AG04450 (cell line): ENCODE measurements at regions of chr14 and their contacts with region 1.

Region 1: GRCh38 chr14:23076785-23077408 is 18.0 kb downstream of the ACIN1 start:
- DNase-seq: no peak
- H3K4me3 ChIP-seq: no peak overlapping the region
- H3K27ac ChIP-seq: no peak overlapping the region
- H3K27me3 ChIP-seq: no peaks in the 10 kb centered on the region
- CTCF ChIP-seq: peak; percentile 75

Region 2: GRCh38 chr14:22147704-22148103 is 929.2 kb before region 1 on chr14:
- CTCF ChIA-PET with region 1: no interaction called
- POLR2A ChIA-PET with region 1: no interaction called
- DNase-seq: no peak
- H3K4me3 ChIP-seq: no peak overlapping the region
- H3K27ac ChIP-seq: no peak overlapping the region
- H3K27me3 ChIP-seq: peaks cover 12% of the 10 kb centered on the region
- CTCF ChIP-seq: no peak

Region 3: GRCh38 chr14:22994762-22995275 is 82.1 kb before region 1 on chr14:
- CTCF ChIA-PET with region 1: interaction called, 15 read pairs
- POLR2A ChIA-PET with region 1: no interaction called
- DNase-seq: no peak
- H3K4me3 ChIP-seq: no peak overlapping the region
- H3K27ac ChIP-seq: no peak overlapping the region
- H3K27me3 ChIP-seq: no peaks in the 10 kb centered on the region
- CTCF ChIP-seq: peak; percentile 78

Region 4: GRCh38 chr14:23095196-23096108 is 18.6 kb after region 1 on chr14 and contains the start of gene C14orf119:
- CTCF ChIA-PET with region 1: interaction called, 89 read pairs
- POLR2A ChIA-PET with region 1: interaction called, 31 read pairs
- DNase-seq: peak; percentile 99
- H3K4me3 ChIP-seq: peak within 1 kb of the TSS; percentile 95
- H3K27ac ChIP-seq: peak within 1 kb of the TSS; percentile 99
- H3K27me3 ChIP-seq: no peaks in the 10 kb centered on the region
- CTCF ChIP-seq: no peak
- polyA plus RNA-seq, gene C14orf119: 119 and 128 TPM in 2 replicates

Region 5: DNA sequence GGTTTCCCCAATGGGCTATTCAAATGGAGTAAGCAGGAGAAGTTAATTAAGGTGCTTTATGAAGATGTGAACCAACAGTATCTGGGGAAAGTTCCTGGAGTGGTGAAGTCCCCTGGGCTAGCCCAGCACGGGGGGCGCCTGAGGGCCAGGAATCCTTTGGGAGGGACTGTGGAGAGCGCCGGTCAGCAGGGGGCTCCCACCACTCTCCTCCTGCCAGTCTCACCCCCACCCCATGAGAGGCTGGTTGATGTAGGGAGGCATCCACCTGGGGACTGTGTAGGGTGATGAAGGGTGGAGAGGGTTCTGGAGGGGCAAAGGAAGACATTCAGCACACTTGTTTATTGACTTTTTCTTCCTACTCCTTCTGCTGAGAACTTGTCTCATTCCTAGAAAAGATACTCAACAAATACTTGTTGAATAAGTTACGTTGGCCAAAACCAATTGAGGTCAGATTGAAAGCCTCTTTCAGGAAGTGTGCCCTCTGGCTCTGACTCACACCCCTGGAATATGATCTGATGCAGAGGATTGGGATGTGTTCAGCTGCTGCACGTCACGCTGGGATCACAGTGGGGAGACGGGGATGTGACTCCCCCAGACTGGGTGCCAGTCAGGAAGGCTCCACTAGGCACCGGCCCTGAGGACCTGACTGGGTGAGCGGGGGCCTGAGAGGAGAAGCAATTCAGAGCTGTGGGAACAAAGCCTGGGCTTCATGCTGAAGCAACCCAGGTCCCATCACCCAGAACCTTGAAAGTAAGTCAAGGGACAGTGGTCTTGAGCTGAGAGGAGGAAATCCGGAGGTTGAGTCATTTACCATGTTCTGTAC is 38.0 kb after region 1 on chr14:
- CTCF ChIA-PET with region 1: interaction called, 91 read pairs
- POLR2A ChIA-PET with region 1: no interaction called
- DNase-seq: peak; percentile 89
- H3K4me3 ChIP-seq: peak overlapping the region; percentile 17; the same call in 1 of the 2 replicates
- H3K27ac ChIP-seq: peak overlapping the region; percentile 91
- H3K27me3 ChIP-seq: no peaks in the 10 kb centered on the region
- CTCF ChIP-seq: peak; percentile 16

Region 6: DNA sequence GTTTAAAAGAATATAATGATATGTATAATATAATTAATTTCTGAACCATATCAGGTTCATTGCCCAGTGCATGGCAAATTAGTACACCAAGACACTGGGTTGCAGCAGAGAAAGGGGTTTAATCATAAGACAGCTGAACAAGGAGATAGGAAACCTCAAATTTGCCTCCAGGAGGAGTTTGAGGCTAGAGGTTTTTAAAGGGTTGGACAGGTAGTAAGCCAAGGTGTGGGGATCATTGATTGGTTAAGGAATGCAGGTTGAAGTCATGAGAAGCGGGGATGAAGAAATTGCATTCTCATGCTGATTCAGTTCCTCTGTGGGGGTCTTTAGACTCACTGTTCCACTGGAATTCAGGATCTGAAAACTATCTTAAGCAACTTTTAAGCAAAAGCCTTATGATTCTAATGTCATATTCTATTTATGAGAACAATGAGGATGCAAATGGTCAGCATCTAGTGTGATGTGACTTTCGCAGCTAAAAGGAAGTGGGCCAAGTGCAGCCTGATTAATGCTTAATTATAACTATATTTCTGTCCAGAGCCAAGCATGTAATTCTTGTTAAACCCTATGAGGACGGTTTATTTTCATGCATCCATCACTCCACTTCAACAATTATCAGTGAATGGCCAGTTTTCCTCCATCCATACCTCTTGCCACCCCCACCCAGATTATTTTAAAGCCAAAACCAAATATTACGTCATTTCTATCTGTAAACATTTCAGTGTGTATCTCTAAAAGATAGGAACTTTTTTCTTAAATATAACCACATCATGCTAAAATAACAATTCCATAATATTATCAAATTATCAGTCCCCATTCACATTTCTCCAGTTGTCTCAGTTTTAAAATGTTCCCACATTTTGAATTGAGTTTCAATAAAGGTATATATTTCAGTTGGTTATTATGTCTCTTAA is 175.8 kb after region 1 on chr14:
- CTCF ChIA-PET with region 1: no interaction called
- POLR2A ChIA-PET with region 1: no interaction called
- DNase-seq: no peak
- H3K4me3 ChIP-seq: no peak overlapping the region
- H3K27ac ChIP-seq: no peak overlapping the region
- H3K27me3 ChIP-seq: peaks cover 6% of the 10 kb centered on the region
- CTCF ChIP-seq: no peak

Region 7: GRCh38 chr14:23286020-23286905 is 209.4 kb after region 1 on chr14 and contains the start of gene HOMEZ:
- CTCF ChIA-PET with region 1: no interaction called
- POLR2A ChIA-PET with region 1: no interaction called
- DNase-seq: peak; percentile 95
- H3K4me3 ChIP-seq: peak within 1 kb of the TSS; percentile 79
- H3K27ac ChIP-seq: peak within 1 kb of the TSS; percentile 90
- H3K27me3 ChIP-seq: peaks cover 6% of the 10 kb centered on the region
- CTCF ChIP-seq: 0 out of 2 replicates have a peak, but pooled peaks have one; percentile 10
- polyA plus RNA-seq, gene HOMEZ: 11.2 and 13.2 TPM in 2 replicates

Region 8: DNA sequence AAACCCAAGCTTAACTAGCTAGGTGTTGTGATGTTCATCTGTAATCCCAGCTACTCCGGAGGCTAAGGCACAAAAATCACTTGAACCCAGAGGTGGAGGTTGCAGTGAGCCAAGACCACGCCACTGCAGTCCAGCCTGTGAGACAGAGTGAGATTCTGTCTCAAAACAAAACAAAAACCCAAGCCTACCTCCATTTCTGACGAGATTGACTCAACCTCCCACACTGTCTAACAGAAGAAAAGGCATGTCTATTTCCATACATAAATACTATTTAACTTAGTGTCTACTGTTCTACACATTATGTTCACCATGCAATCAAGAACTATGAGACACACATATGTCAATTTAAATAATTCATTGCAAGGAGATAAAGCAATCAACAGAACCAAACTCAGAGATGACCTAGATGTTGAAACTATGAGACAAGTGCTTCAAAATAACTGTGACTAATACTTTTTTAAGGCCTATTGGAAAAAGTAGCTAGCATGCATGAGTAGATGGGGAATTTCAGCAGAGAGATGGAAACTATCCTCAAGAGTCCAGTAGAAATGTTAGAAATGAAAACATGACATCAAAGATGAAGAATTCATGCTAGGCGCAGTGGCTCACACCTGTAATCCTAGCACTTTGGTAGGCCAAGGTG is 800.8 kb after region 1 on chr14:
- CTCF ChIA-PET with region 1: no interaction called
- POLR2A ChIA-PET with region 1: no interaction called
- DNase-seq: no peak
- H3K4me3 ChIP-seq: no peak overlapping the region
- H3K27ac ChIP-seq: no peak overlapping the region
- H3K27me3 ChIP-seq: no peaks in the 10 kb centered on the region
- CTCF ChIP-seq: no peak